Left lung (tissue), 14 donors: ENCODE measurements at regions of chr4 and their contacts with region 1.

Region 1: GRCh38 chr4:4334798-4335520 is 44.9 kb downstream of the ZBTB49 start:
- DNase-seq: peak in 3 of 4 donors; percentile 46 to 84 (median 69)
- ATAC-seq: peak; percentile 46
- H3K4me3 ChIP-seq: no peak overlapping the region
- H3K27ac ChIP-seq: no peak overlapping the region
- H3K4me1 ChIP-seq: no peaks in the 10 kb centered on the region
- H3K27me3 ChIP-seq: peaks cover 0 to 7% of the 10 kb centered on the region in 2 donors
- CTCF ChIP-seq: peak; percentile 67 to 77

Region 2: GRCh38 chr4:4254666-4255065 is 80.3 kb before region 1 on chr4:
- intact Hi-C with region 1: loop called in 1 of 2 experiments (anchors 5 kb)
- DNase-seq: no peak
- ATAC-seq: no peak
- H3K4me3 ChIP-seq: no peak overlapping the region
- H3K27ac ChIP-seq: no peak overlapping the region
- H3K4me1 ChIP-seq: no peaks in the 10 kb centered on the region
- H3K27me3 ChIP-seq: no peaks in the 10 kb centered on the region
- CTCF ChIP-seq: no peak